Transverse colon (tissue), 4 donors: ENCODE measurements at regions of chr3 and their contacts with region 1.

Region 1: GRCh38 chr3:31768479-31769123 is 212.5 kb downstream of the OSBPL10 start:
- DNase-seq: peak; percentile 54
- H3K4me3 ChIP-seq: no peak overlapping the region
- H3K27ac ChIP-seq: no peak overlapping the region
- H3K4me1 ChIP-seq: no peaks in the 10 kb centered on the region
- H3K27me3 ChIP-seq: no peaks in the 10 kb centered on the region
- CTCF ChIP-seq: peak; percentile 50 to 60 (median 55)
- EP300 ChIP-seq: no peak
- POLR2A ChIP-seq: no peak

Region 2: GRCh38 chr3:30768703-30769685 is 999.6 kb before region 1 on chr3:
- in situ Hi-C with region 1: loop called in 1 of 4 experiments (anchors 25 kb)
- intact Hi-C with region 1: no loop called
- DNase-seq: peak; percentile 69
- H3K4me3 ChIP-seq: no peak overlapping the region
- H3K27ac ChIP-seq: no peak overlapping the region
- H3K4me1 ChIP-seq: no peaks in the 10 kb centered on the region
- H3K27me3 ChIP-seq: no peaks in the 10 kb centered on the region
- CTCF ChIP-seq: peak; percentile 61 to 82 (median 76)
- EP300 ChIP-seq: no peak
- POLR2A ChIP-seq: no peak

Region 3: DNA sequence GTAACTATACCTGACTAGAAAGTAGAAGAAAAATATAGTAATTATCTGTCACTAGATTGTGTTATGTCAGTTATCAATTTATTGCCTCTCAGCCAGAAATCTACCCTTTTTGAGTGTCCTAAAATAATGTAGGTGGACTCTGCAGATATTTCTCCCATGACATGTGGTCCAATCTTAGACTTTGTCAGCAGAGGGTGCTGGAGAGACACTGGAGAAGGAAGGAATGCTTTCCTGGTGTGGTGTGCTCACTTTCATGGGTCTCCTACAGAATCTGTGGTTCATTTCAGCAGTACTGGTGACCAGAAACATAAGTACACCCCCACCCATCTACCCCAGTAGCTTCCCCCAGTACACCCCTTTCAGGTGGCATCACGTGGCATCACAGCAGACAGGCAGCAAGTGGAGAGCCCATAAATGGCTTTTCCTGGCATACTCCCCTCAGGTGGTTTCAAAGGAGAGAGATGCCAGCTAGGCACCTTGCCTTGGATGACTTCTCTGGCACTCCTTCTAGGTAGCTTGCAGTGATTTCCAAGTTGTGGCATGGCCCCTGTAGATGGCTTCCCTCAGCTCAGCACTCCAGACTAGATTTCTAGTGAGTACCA is 988.8 kb before region 1 on chr3:
- in situ Hi-C with region 1: loop called in 2 of 4 experiments (anchors 25 kb)
- intact Hi-C with region 1: no loop called
- DNase-seq: no peak
- H3K4me3 ChIP-seq: no peak overlapping the region
- H3K27ac ChIP-seq: no peak overlapping the region
- H3K4me1 ChIP-seq: no peaks in the 10 kb centered on the region
- H3K27me3 ChIP-seq: no peaks in the 10 kb centered on the region
- CTCF ChIP-seq: peak in 4 of 5 experiments; percentile 26 to 39 (median 30)
- EP300 ChIP-seq: no peak
- POLR2A ChIP-seq: no peak

Region 4: GRCh38 chr3:31695280-31696008 is 73.2 kb before region 1 on chr3:
- in situ Hi-C with region 1: no loop called
- intact Hi-C with region 1: no loop called
- DNase-seq: peak; percentile 14
- H3K4me3 ChIP-seq: no peak overlapping the region
- H3K27ac ChIP-seq: no peak overlapping the region
- H3K4me1 ChIP-seq: no peaks in the 10 kb centered on the region
- H3K27me3 ChIP-seq: no peaks in the 10 kb centered on the region
- CTCF ChIP-seq: peak in 2 of 5 experiments; percentile 19 to 21
- EP300 ChIP-seq: no peak
- POLR2A ChIP-seq: no peak

Region 5: GRCh38 chr3:31959951-31960792 is 191.6 kb after region 1 on chr3:
- in situ Hi-C with region 1: no loop called
- intact Hi-C with region 1: no loop called
- DNase-seq: no peak
- H3K4me3 ChIP-seq: peak overlapping the region in 2 of 4 donors; percentile 13 to 30
- H3K27ac ChIP-seq: peak overlapping the region; percentile 63 to 81 (median 67)
- H3K4me1 ChIP-seq: peaks cover 4 to 29% (median 12%) of the 10 kb centered on the region in 4 donors
- H3K27me3 ChIP-seq: no peaks in the 10 kb centered on the region
- CTCF ChIP-seq: no peak
- EP300 ChIP-seq: no peak
- POLR2A ChIP-seq: no peak

Region 6: DNA sequence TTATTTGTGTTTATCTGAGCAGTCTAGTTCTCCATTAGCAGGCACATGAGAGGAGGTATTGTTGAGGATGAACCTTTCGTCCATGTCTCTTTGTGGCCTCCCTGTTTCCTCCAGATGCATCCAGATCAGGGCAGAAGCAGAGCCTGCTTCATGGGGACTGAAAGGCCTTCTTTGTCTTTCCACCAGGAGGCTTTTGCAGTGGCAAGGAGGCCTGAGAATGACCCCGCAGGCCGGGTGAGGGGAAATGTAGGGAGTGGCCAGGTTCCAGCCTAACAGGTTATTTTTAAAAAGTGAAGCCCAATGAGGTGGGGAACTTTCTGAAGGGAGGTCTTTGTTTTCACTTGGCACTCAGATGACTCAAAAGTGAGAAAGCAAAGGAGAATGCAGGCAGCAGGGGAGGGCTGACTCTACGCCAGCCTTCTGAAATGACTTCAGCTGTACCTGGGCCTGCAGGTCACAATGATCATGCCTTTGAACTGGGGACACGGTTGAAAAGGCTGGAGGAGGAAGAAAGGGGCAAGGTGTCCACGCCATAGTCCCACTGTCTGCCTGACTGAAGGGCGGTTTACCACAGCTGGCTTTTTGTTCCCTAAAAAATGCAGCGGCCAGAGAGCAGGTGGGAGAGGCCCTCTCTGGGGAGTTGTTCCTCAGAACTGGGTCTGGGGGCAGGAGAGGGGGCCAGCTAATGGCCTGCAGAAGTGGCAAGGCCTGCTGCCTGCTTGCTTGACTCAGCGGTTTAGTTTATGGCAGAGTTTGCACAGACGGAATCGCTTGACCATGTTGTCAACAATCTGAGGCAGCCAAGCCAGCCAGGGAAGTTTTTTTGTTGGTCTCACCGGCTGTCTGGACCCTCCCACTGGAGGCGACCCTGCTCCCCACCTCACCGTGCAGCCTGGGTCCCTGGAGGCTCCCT is 651.8 kb after region 1 on chr3:
- in situ Hi-C with region 1: no loop called
- intact Hi-C with region 1: no loop called
- DNase-seq: no peak
- H3K4me3 ChIP-seq: no peak overlapping the region
- H3K27ac ChIP-seq: peak overlapping the region; percentile 52 to 81 (median 71)
- H3K4me1 ChIP-seq: peaks cover 31 to 43% (median 37%) of the 10 kb centered on the region in 4 donors
- H3K27me3 ChIP-seq: no peaks in the 10 kb centered on the region
- CTCF ChIP-seq: no peak
- EP300 ChIP-seq: no peak
- POLR2A ChIP-seq: no peak